MCF 10A (cell line): ENCODE measurements at regions of chr3 and their contacts with region 1.

Region 1: DNA sequence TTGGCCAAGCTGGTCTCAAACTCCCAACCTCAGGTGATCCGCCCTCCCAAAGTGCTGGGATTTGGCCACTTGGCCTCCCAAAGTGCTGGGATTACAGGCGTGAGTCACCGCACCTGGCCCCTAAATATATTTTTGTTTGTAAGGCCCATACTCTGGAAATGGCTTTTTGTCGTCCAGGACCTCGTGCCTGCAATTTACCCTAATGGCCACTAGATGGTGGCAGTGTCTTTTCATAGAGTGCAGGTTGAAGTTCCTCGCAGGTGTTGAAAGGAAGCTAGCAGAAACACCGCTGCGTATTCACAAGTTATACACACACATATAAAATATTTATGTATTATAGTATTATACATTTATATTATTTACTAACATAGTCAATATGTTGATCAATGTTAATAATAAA is 97.2 kb downstream of the LRTM1 start:
- DNase-seq: peak; percentile 61
- H3K4me3 Mint-ChIP-seq: no peak overlapping the region
- H3K27ac Mint-ChIP-seq: no peak overlapping the region
- H3K4me1 Mint-ChIP-seq: no peaks in the 10 kb centered on the region
- H3K27me3 Mint-ChIP-seq: no peaks in the 10 kb centered on the region
- CTCF ChIP-seq: peak; percentile 67

Region 2: GRCh38 chr3:54819946-54820345 is 10.7 kb before region 1 on chr3:
- CTCF ChIA-PET with region 1: interaction called, 10 read pairs
- POLR2A ChIA-PET with region 1: no interaction called
- intact Hi-C with region 1: no loop called
- DNase-seq: no peak
- H3K4me3 Mint-ChIP-seq: no peak overlapping the region
- H3K27ac Mint-ChIP-seq: no peak overlapping the region
- H3K4me1 Mint-ChIP-seq: peaks cover 5% of the 10 kb centered on the region
- H3K27me3 Mint-ChIP-seq: no peaks in the 10 kb centered on the region
- CTCF ChIP-seq: no peak

Region 3: GRCh38 chr3:54846119-54846518 is 15.5 kb after region 1 on chr3:
- CTCF ChIA-PET with region 1: interaction called, 13 read pairs
- POLR2A ChIA-PET with region 1: no interaction called
- intact Hi-C with region 1: no loop called
- DNase-seq: no peak
- H3K4me3 Mint-ChIP-seq: no peak overlapping the region
- H3K27ac Mint-ChIP-seq: no peak overlapping the region
- H3K4me1 Mint-ChIP-seq: peaks cover 6% of the 10 kb centered on the region
- H3K27me3 Mint-ChIP-seq: peaks cover 33% of the 10 kb centered on the region
- CTCF ChIP-seq: no peak

Region 4: GRCh38 chr3:54891548-54892120 is 61.0 kb after region 1 on chr3:
- CTCF ChIA-PET with region 1: no interaction called
- POLR2A ChIA-PET with region 1: no interaction called
- intact Hi-C with region 1: no loop called
- DNase-seq: peak; percentile 99
- H3K4me3 Mint-ChIP-seq: peak overlapping the region; percentile 51
- H3K27ac Mint-ChIP-seq: peak overlapping the region; percentile 85
- H3K4me1 Mint-ChIP-seq: peaks cover 44% of the 10 kb centered on the region
- H3K27me3 Mint-ChIP-seq: no peaks in the 10 kb centered on the region
- CTCF ChIP-seq: peak; percentile 42

Region 5: DNA sequence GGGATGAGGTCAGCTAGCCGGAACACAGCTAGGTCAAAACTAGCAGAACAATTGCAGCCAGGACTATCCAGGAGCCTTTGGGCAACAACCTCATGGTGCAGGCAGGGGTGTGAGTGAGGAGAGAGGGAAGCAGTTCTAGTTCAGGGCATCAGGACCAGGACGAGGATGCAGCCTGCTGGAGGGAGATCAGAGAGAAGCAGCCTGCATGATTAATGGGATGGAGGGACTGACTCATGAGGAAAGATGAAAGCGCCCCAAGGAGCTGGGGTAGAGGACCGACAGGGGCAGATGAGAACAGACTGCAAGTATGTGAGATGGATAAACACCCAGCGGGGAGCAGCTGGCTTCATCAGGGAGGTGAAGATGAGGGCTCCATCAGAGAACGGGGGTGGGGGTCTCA is 135.1 kb after region 1 on chr3:
- CTCF ChIA-PET with region 1: no interaction called
- POLR2A ChIA-PET with region 1: no interaction called
- intact Hi-C with region 1: no loop called
- DNase-seq: no peak
- H3K4me3 Mint-ChIP-seq: no peak overlapping the region
- H3K27ac Mint-ChIP-seq: peak overlapping the region; percentile 13
- H3K4me1 Mint-ChIP-seq: peaks cover 12% of the 10 kb centered on the region
- H3K27me3 Mint-ChIP-seq: no peaks in the 10 kb centered on the region
- CTCF ChIP-seq: no peak